ENCODE measurements at regions of chr3 and their contacts with region 1.

Region 1: GRCh38 chr3:111859974-111860859 is 1.2 kb downstream of the PHLDB2 start:
- DNase-seq: peak; percentile 75 to 94
- H3K4me3 ChIP-seq: peak overlapping the region; percentile 57 to 85 (median 80)
- H3K27ac ChIP-seq: peak overlapping the region; percentile 83 to 97 (median 91)
- H3K4me1 ChIP-seq: peaks cover 10 to 66% (median 49%) of the 10 kb centered on the region in 4 donors
- H3K27me3 ChIP-seq: no peaks in the 10 kb centered on the region
- CTCF ChIP-seq: peak in 5 of 7 experiments; percentile 19 to 61 (median 37)
- EP300 ChIP-seq: no peak
- POLR2A ChIP-seq: peak in 1 of 4 donors; percentile 25

Region 2: GRCh38 chr3:111723293-111724215 is 136.7 kb before region 1 on chr3:
- intact Hi-C with region 1: loop called (anchors 10 kb)
- DNase-seq: peak in 1 of 2 donors; percentile 52
- H3K4me3 ChIP-seq: no peak overlapping the region
- H3K27ac ChIP-seq: peak overlapping the region in 1 of 5 donors; percentile 24
- H3K4me1 ChIP-seq: peaks cover 0 to 11% (median 4%) of the 10 kb centered on the region in 4 donors
- H3K27me3 ChIP-seq: no peaks in the 10 kb centered on the region
- CTCF ChIP-seq: no peak
- EP300 ChIP-seq: no peak
- POLR2A ChIP-seq: no peak

Measured in stomach (tissue), 19 donors.